HepG2 (cell line): ENCODE measurements at regions of chrX and their contacts with region 1.

Region 1: GRCh38 chrX:68828740-68829552 is at the start of gene EFNB1:
- DNase-seq: peak; percentile 86
- ATAC-seq: peak; percentile 87
- H3K4me3 ChIP-seq: peak within 1 kb of the TSS; percentile 52 to 68 (median 63)
- H3K27ac ChIP-seq: no peak within 1 kb of the TSS
- H3K4me1 ChIP-seq: peaks cover 26% of the 10 kb centered on the region
- H3K27me3 ChIP-seq: no peaks in the 10 kb centered on the region
- CTCF ChIP-seq: no peak
- EP300 ChIP-seq: no peak
- POLR2A ChIP-seq: peak; percentile 80 to 90
- RAD21 ChIP-seq: no peak
- total RNA-seq, gene EFNB1: 2.9 and 4.1 TPM in 2 replicates

Region 2: GRCh38 chrX:69031221-69031620 is 202.3 kb after region 1 on chrX:
- CTCF ChIA-PET with region 1: no interaction called
- POLR2A ChIA-PET with region 1: interaction called, 3 read pairs
- in situ Hi-C with region 1: loop called (anchors 10 kb)
- intact Hi-C with region 1: no loop called
- DNase-seq: peak; percentile 6
- ATAC-seq: peak; percentile 92
- H3K4me3 ChIP-seq: no peak overlapping the region
- H3K27ac ChIP-seq: no peak overlapping the region
- H3K4me1 ChIP-seq: peaks cover 16% of the 10 kb centered on the region; the same call in 1 of the 2 replicates
- H3K27me3 ChIP-seq: no peaks in the 10 kb centered on the region
- CTCF ChIP-seq: peak; percentile 45
- EP300 ChIP-seq: no peak
- POLR2A ChIP-seq: no peak
- RAD21 ChIP-seq: no peak

Region 3: DNA sequence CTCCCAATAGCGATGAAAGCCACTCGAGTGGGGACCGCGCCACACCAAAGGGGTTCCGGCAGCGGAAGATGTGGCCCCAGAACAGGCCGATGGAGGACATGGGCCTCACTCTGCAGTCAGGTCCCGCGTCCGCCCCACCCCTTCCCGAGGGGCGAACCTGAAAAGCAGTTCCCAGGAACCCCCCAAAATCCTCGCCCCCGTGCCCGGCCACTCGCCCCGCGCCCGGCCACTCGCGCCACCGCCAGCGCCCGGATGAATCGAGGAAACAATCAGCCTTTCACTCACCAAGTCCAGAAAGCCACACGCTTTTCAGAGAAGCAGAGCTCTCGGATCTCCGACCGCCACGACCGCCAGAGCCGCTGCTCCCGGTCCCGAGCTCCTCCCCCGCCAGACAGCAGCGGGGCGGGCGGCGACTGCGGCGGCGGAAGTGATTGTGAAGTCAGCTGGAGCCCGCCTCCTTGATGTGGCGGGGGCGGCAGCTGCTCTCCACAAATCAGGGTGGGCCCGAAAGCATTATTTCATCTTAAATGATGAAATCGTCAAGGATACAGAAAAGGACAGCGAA is 336.2 kb after region 1 on chrX and contains the start of gene PJA1:
- CTCF ChIA-PET with region 1: no interaction called
- POLR2A ChIA-PET with region 1: interaction called, 11 read pairs
- in situ Hi-C with region 1: no loop called
- intact Hi-C with region 1: no loop called
- DNase-seq: peak; percentile 31
- ATAC-seq: peak; percentile 98
- H3K4me3 ChIP-seq: peak within 1 kb of the TSS; percentile 59 to 73 (median 73)
- H3K27ac ChIP-seq: no peak within 1 kb of the TSS
- H3K4me1 ChIP-seq: no peaks in the 10 kb centered on the region
- H3K27me3 ChIP-seq: no peaks in the 10 kb centered on the region
- CTCF ChIP-seq: no peak
- EP300 ChIP-seq: no peak
- POLR2A ChIP-seq: peak in 1 of 2 experiments; percentile 56; a peak in 2 of 4 replicates
- RAD21 ChIP-seq: no peak
- total RNA-seq, gene PJA1: 9.6 and 12.3 TPM in 2 replicates

Region 4: DNA sequence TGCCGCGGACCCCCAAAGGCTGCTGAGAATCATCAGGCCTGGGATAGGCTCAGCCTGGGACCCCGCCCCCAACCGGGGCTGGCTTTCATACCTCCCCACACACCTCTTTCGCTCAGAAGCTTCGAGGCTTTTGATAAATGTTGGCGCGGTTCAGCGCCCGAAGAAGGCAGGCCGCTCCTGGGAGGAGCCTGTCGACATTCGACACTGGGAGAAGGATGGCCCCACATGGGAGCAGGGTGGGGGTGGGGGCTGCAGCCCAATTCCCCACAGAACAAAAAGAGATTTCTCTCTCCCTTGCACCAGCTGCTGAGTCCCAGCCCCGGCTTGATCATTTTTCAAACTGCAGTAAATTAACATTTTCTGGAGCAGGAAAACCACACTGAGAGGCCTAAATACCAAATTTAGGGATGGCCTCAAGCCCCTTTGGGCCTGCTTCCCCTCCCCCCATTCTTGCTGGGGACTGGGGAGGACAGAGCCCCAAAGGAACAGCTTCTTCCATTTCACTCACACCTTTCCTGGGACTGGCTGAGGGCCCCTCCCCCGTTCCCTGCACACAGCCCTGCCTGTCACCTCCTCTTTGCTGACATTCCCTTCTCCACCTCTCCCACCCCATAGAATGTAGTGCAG is 449.2 kb after region 1 on chrX:
- CTCF ChIA-PET with region 1: no interaction called
- POLR2A ChIA-PET with region 1: no interaction called
- in situ Hi-C with region 1: loop called (anchors 5 kb)
- intact Hi-C with region 1: no loop called
- DNase-seq: no peak
- ATAC-seq: no peak
- H3K4me3 ChIP-seq: no peak overlapping the region
- H3K27ac ChIP-seq: no peak overlapping the region
- H3K4me1 ChIP-seq: peaks cover 20% of the 10 kb centered on the region
- H3K27me3 ChIP-seq: no peaks in the 10 kb centered on the region
- CTCF ChIP-seq: no peak
- EP300 ChIP-seq: no peak
- POLR2A ChIP-seq: no peak
- RAD21 ChIP-seq: no peak

Region 5: GRCh38 chrX:69387567-69388487 is 558.9 kb after region 1 on chrX:
- CTCF ChIA-PET with region 1: no interaction called
- POLR2A ChIA-PET with region 1: no interaction called
- in situ Hi-C with region 1: loop called (anchors 10 kb)
- intact Hi-C with region 1: no loop called
- DNase-seq: peak; percentile 45
- ATAC-seq: peak; percentile 98
- H3K4me3 ChIP-seq: no peak overlapping the region
- H3K27ac ChIP-seq: no peak overlapping the region
- H3K4me1 ChIP-seq: no peaks in the 10 kb centered on the region
- H3K27me3 ChIP-seq: no peaks in the 10 kb centered on the region; a peak in 1 of 5 replicates
- CTCF ChIP-seq: peak; percentile 79
- EP300 ChIP-seq: no peak
- POLR2A ChIP-seq: no peak
- RAD21 ChIP-seq: peak; percentile 63